CD8-positive, alpha-beta memory T cell (primary cell): ENCODE measurements at regions of chr12 and their contacts with region 1.

Region 1: DNA sequence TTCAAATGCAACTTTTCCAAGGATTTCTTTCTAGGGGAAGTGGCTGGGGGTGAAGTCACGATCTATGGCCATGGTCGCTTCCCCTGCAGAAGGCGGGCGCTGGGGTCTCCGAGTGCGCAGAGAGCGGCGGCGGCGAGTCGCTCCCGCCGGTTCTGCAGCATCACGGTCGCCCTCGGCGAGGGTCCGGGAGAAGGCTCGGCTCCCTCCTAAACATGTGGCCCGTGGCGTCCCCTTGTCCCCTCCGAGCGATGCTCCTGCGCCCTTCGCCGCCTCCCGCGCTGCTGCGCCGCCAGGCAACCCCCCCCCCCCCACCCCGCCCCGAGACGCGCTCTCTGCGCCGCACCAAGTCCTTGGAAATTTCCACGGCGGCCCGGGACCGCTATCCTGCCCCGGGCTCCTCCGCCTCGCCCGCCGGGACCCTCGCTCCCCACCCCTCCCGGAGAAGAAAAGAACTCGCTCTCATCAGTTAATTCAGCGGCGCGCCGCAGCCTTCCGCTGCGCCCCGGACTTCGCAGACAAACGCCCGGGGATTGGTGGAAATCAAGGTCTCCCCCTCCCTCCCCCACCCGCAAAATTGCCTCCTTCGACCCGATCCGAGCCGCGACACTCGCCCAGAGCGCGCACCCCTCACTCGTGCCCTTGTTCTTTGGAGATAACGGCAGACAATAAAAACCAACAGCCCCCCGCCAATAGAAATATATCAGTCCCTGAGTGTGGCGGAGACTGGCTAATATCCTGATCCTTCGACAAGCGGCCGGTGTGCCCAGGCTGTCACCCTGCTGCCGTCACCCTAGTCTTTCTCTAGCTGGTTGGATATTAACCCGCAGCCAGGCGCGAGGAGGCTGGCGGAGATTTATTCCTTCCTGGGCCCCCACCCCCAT is at the start of gene ST8SIA1:
- DNase-seq: peak; percentile 8 to 84 (median 58)
- H3K4me3 ChIP-seq: peak within 1 kb of the TSS; percentile 60
- H3K4me3 Mint-ChIP-seq: peak within 1 kb of the TSS; percentile 90 to 99 (median 97)
- H3K27ac ChIP-seq: peak within 1 kb of the TSS; percentile 73
- H3K27ac Mint-ChIP-seq: peak within 1 kb of the TSS; percentile 89 to 98 (median 93)
- H3K4me1 ChIP-seq: peaks cover 21% of the 10 kb centered on the region
- H3K4me1 Mint-ChIP-seq: peaks cover 41 to 51% (median 50%) of the 10 kb centered on the region in 3 donors
- H3K27me3 ChIP-seq: no peaks in the 10 kb centered on the region
- H3K27me3 Mint-ChIP-seq: peaks cover 0 to 12% of the 10 kb centered on the region in 2 donors
- total RNA-seq, gene ST8SIA1: 10.2 to 11.4 TPM

Region 2: GRCh38 chr12:22083167-22083566 is 251.5 kb before region 1 on chr12:
- CTCF ChIA-PET with region 1: interaction called, 10 read pairs
- POLR2A ChIA-PET with region 1: no interaction called
- DNase-seq: peak in 3 of 5 donors; percentile 5 to 30 (median 30)
- H3K4me3 ChIP-seq: no peak overlapping the region
- H3K4me3 Mint-ChIP-seq: no peak overlapping the region
- H3K27ac ChIP-seq: no peak overlapping the region
- H3K27ac Mint-ChIP-seq: no peak overlapping the region
- H3K4me1 ChIP-seq: no peaks in the 10 kb centered on the region
- H3K4me1 Mint-ChIP-seq: no peaks in the 10 kb centered on the region
- H3K27me3 ChIP-seq: no peaks in the 10 kb centered on the region
- H3K27me3 Mint-ChIP-seq: peaks cover 0 to 4% of the 10 kb centered on the region in 2 donors

Region 3: GRCh38 chr12:22215467-22216253 is 119.0 kb before region 1 on chr12:
- CTCF ChIA-PET with region 1: no interaction called
- POLR2A ChIA-PET with region 1: no interaction called
- DNase-seq: no peak
- H3K4me3 ChIP-seq: no peak overlapping the region
- H3K4me3 Mint-ChIP-seq: no peak overlapping the region
- H3K27ac ChIP-seq: no peak overlapping the region
- H3K27ac Mint-ChIP-seq: peak overlapping the region in 1 of 8 donors; percentile 7
- H3K4me1 ChIP-seq: no peaks in the 10 kb centered on the region
- H3K4me1 Mint-ChIP-seq: peaks cover 2 to 6% (median 5%) of the 10 kb centered on the region in 3 donors
- H3K27me3 ChIP-seq: no peaks in the 10 kb centered on the region
- H3K27me3 Mint-ChIP-seq: no peaks in the 10 kb centered on the region

Region 4: DNA sequence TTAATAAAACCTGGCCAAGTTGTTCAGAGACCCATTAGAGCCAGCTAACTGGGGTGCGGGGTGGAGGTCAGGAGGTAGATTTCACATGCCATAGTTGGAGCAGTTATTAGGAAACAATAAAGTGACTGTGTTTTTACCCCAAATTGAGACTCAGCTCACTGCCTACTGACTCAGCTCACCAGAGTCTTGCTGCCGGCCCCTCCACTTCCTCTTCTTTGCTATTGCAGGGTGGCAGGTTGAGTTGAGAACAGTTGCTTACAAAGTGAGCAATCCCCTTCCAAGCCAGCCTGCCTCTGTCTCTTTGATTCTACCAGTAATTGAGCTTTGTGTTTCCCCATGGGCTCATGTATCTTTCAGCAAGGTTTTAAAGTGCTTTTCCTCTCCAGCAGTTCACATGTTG is 13.0 kb before region 1 on chr12:
- CTCF ChIA-PET with region 1: interaction called, 13 read pairs
- POLR2A ChIA-PET with region 1: no interaction called
- DNase-seq: peak in 2 of 5 donors; percentile 15 to 56
- H3K4me3 ChIP-seq: no peak overlapping the region
- H3K4me3 Mint-ChIP-seq: peak overlapping the region in 3 of 7 donors; percentile 3 to 46 (median 19)
- H3K27ac ChIP-seq: no peak overlapping the region
- H3K27ac Mint-ChIP-seq: peak overlapping the region in 6 of 8 donors; percentile 26 to 76 (median 38)
- H3K4me1 ChIP-seq: no peaks in the 10 kb centered on the region
- H3K4me1 Mint-ChIP-seq: peaks cover 41 to 71% (median 61%) of the 10 kb centered on the region in 3 donors
- H3K27me3 ChIP-seq: no peaks in the 10 kb centered on the region
- H3K27me3 Mint-ChIP-seq: peaks cover 0 to 2% of the 10 kb centered on the region in 2 donors

Region 5: GRCh38 chr12:22409377-22410164 is 74.9 kb after region 1 on chr12:
- CTCF ChIA-PET with region 1: interaction called, 41 read pairs
- POLR2A ChIA-PET with region 1: interaction called, 57 read pairs
- DNase-seq: peak in 4 of 5 donors; percentile 32 to 86 (median 61)
- H3K4me3 ChIP-seq: peak overlapping the region; percentile 52
- H3K4me3 Mint-ChIP-seq: peak overlapping the region; percentile 83 to 96 (median 87)
- H3K27ac ChIP-seq: peak overlapping the region; percentile 86
- H3K27ac Mint-ChIP-seq: peak overlapping the region; percentile 91 to 99 (median 96)
- H3K4me1 ChIP-seq: peaks cover 8% of the 10 kb centered on the region
- H3K4me1 Mint-ChIP-seq: peaks cover 57 to 67% (median 66%) of the 10 kb centered on the region in 3 donors
- H3K27me3 ChIP-seq: no peaks in the 10 kb centered on the region
- H3K27me3 Mint-ChIP-seq: no peaks in the 10 kb centered on the region

Region 6: GRCh38 chr12:22459838-22460490 is 125.3 kb after region 1 on chr12:
- CTCF ChIA-PET with region 1: interaction called, 10 read pairs
- POLR2A ChIA-PET with region 1: no interaction called
- DNase-seq: peak in 2 of 5 donors; percentile 21 to 23
- H3K4me3 ChIP-seq: no peak overlapping the region
- H3K4me3 Mint-ChIP-seq: no peak overlapping the region
- H3K27ac ChIP-seq: no peak overlapping the region
- H3K27ac Mint-ChIP-seq: peak overlapping the region in 1 of 8 donors; percentile 46
- H3K4me1 ChIP-seq: no peaks in the 10 kb centered on the region
- H3K4me1 Mint-ChIP-seq: peaks cover 0 to 5% (median 4%) of the 10 kb centered on the region in 3 donors
- H3K27me3 ChIP-seq: no peaks in the 10 kb centered on the region
- H3K27me3 Mint-ChIP-seq: no peaks in the 10 kb centered on the region